ENCODE measurements at regions of chr2 and their contacts with region 1.

Region 1: DNA sequence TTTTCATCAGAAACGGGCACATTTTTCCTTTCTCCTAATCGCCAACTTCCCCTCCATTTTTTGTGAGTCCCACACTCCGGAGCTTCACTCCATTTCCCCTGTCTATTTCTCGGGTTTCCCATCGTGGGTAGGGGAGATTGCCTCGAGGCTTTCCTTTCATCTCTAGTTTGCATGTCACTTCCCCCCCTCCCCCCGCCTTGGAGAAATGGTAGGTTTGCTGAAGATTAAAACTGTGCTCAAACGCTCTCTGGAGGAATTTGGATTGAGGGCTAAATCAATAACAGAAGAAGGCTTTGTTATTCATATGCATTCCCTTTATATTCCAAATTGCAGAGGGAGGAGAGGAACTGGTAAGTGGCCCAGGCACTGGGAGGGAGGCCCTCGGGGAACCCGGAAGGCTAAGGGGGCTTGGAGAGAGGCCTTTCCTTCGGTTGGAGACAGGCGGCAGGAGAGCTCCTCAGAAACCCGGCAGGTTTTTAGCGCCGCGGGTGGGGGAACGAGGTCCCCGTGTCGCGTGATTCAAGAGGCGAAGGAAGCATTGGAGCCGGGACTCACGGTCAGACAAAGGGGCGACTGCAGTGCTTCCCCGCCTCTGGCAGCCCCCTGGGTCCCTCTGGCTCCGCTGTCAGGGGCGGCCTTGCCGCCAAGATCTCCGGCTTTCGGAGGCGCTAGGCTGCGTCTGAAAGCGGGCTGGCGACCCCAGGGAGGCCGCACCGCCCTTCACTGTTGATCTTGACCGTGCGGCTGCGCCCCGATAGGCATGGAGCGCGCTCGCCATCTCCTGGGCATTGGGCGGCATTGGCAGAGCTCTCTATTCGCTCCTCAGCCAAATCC is 2.4 kb upstream of the HOXD12 start:
- DNase-seq: peak; percentile 70
- ATAC-seq: peak; percentile 72
- H3K4me3 Mint-ChIP-seq: peak overlapping the region; percentile 65
- H3K27ac Mint-ChIP-seq: no peak overlapping the region
- H3K4me1 Mint-ChIP-seq: peaks cover 15% of the 10 kb centered on the region
- H3K27me3 Mint-ChIP-seq: peaks cover 90% of the 10 kb centered on the region

Region 2: DNA sequence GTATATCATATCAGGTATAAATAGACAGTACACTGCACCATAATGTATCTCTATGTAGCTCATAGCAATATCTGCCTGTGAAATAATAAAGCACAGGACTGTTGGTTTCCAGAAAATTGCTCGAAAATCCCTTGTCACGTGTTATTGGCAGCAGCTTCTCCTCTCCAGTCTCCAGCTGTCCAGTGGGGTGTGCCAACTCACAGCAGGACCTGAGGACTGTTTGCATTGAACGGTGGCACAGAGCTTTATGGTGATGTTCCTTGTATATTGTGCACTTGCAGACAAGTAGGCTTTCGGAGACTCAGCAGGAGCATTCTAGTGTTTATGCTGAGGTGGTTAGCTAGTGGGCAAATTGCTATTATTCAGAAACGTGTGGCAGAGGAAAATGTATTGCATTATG is 733.5 kb before region 1 on chr2:
- CTCF ChIA-PET with region 1: interaction called, 17 read pairs
- DNase-seq: no peak
- ATAC-seq: no peak
- H3K4me3 Mint-ChIP-seq: no peak overlapping the region
- H3K27ac Mint-ChIP-seq: no peak overlapping the region
- H3K4me1 Mint-ChIP-seq: no peaks in the 10 kb centered on the region
- H3K27me3 Mint-ChIP-seq: peaks cover 47% of the 10 kb centered on the region

Region 3: DNA sequence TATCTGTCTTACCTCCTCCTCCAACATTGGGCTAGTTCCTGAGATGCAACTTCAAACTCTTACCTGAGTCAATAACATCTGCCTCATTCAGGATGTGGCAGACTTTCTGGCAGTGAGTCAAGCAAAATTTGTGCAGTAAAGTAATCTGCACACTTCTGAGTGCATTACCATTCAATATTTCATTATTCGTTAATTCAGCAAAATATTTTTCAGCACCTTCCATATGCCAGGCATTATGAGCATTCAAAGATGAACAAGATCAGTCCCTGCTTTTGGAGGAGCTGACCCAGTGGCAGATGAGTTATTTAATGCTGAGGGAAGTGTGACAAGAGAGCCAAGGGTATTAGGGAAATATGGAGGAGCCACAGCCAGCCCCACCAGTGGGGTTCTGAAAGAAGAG is 434.9 kb before region 1 on chr2:
- CTCF ChIA-PET with region 1: no interaction called
- DNase-seq: no peak
- ATAC-seq: no peak
- H3K4me3 Mint-ChIP-seq: no peak overlapping the region
- H3K27ac Mint-ChIP-seq: no peak overlapping the region
- H3K4me1 Mint-ChIP-seq: no peaks in the 10 kb centered on the region
- H3K27me3 Mint-ChIP-seq: peaks cover 4% of the 10 kb centered on the region

Region 4: GRCh38 chr2:175690113-175690837 is 406.9 kb before region 1 on chr2:
- CTCF ChIA-PET with region 1: interaction called, 65 read pairs
- DNase-seq: no peak
- ATAC-seq: peak; percentile 53
- H3K4me3 Mint-ChIP-seq: no peak overlapping the region
- H3K27ac Mint-ChIP-seq: no peak overlapping the region
- H3K4me1 Mint-ChIP-seq: no peaks in the 10 kb centered on the region
- H3K27me3 Mint-ChIP-seq: peaks cover 28% of the 10 kb centered on the region

Region 5: DNA sequence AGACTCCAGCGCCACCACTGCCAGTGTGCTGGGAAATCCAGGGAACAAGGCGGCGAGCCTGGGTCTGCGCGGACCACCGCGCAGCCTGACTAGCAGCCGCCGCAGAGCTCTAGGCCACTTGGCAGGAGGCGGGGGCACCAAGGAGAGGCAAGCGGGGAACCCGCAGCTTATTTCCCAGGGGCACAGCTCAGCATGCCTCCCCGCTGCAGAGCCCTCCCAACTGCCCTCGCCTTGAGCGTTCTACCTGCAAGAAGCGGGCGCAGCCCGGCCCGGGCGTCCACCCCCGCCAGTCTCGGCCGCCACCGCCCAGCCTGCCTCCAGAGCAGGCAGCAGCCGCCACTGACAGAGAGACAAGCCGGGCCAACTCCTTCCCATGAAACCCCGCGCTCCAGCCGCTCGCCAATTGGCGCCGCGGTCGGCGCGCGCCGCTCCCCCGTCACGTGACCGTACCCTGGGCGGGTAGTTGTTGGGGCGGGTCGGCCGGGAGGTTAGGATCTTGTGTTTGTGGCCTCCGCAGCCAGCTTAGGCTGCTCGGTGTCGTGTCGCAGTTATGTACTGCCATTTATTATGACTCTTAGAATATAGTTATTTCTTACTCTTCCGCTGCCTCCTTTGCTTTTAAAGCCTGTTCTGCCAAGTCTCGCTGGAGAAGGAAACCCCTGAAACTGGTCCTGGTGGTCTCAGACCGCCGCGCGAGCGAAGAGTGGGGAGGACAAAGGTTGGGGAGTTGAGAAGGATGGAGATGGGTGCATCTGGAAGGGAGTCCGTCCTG is 95.1 kb before region 1 on chr2 and contains the start of gene LNPK:
- CTCF ChIA-PET with region 1: interaction called, 12 read pairs
- DNase-seq: peak; percentile 95
- ATAC-seq: peak; percentile 95
- H3K4me3 Mint-ChIP-seq: peak within 1 kb of the TSS; percentile 96
- H3K27ac Mint-ChIP-seq: peak within 1 kb of the TSS; percentile 85
- H3K4me1 Mint-ChIP-seq: peaks cover 25% of the 10 kb centered on the region
- H3K27me3 Mint-ChIP-seq: peaks cover 12% of the 10 kb centered on the region
- total RNA-seq, gene LNPK: 34.1 to 38.2 TPM